WTC11 (cell line): ENCODE measurements at regions of chr1 and their contacts with region 1.

Region 1: GRCh38 chr1:19704247-19705113 is 39.8 kb downstream of the HTR6 start:
- DNase-seq: peak; percentile 90
- ATAC-seq: peak; percentile 93
- H3K4me3 Mint-ChIP-seq: peak overlapping the region; percentile 33
- H3K27ac Mint-ChIP-seq: no peak overlapping the region
- H3K4me1 Mint-ChIP-seq: peaks cover 14% of the 10 kb centered on the region
- H3K27me3 Mint-ChIP-seq: no peaks in the 10 kb centered on the region
- CTCF ChIP-seq: peak; percentile 95

Region 2: DNA sequence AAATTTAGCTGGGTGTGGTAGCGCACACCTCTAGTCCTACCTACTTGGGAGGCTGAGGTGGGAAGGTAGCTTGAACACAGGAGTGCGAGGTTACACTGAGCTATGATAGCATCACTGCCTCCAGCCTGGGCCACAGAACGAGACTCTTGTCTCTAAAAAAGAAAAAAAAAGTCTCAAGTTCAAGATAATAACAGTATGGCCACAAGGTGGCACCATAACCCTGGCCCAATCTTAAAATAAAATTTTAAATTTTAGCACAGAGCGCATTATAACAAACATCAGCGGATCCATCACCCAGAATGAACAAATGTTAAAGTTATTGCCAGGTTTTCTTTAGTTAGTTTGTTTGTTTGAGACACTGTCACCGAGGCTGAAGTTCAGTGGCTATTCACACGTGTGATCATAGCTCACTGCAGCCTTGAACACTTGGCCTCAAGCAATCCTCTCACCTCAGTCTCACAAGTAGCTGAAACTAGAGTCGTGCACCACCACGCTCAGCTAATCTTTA is 42.7 kb before region 1 on chr1:
- CTCF ChIA-PET with region 1: interaction called, 208 read pairs
- POLR2A ChIA-PET with region 1: interaction called, 4 read pairs
- DNase-seq: no peak
- ATAC-seq: no peak
- H3K4me3 Mint-ChIP-seq: no peak overlapping the region
- H3K27ac Mint-ChIP-seq: no peak overlapping the region
- H3K4me1 Mint-ChIP-seq: peaks cover 14% of the 10 kb centered on the region
- H3K27me3 Mint-ChIP-seq: peaks cover 38% of the 10 kb centered on the region
- CTCF ChIP-seq: peak; percentile 66

Region 3: GRCh38 chr1:19682257-19682656 is 22.2 kb before region 1 on chr1:
- CTCF ChIA-PET with region 1: interaction called, 38 read pairs
- POLR2A ChIA-PET with region 1: interaction called, 3 read pairs
- DNase-seq: no peak
- ATAC-seq: no peak
- H3K4me3 Mint-ChIP-seq: no peak overlapping the region
- H3K27ac Mint-ChIP-seq: no peak overlapping the region
- H3K4me1 Mint-ChIP-seq: peaks cover 16% of the 10 kb centered on the region
- H3K27me3 Mint-ChIP-seq: no peaks in the 10 kb centered on the region; the same call in 1 of the 2 replicates
- CTCF ChIP-seq: no peak

Region 4: DNA sequence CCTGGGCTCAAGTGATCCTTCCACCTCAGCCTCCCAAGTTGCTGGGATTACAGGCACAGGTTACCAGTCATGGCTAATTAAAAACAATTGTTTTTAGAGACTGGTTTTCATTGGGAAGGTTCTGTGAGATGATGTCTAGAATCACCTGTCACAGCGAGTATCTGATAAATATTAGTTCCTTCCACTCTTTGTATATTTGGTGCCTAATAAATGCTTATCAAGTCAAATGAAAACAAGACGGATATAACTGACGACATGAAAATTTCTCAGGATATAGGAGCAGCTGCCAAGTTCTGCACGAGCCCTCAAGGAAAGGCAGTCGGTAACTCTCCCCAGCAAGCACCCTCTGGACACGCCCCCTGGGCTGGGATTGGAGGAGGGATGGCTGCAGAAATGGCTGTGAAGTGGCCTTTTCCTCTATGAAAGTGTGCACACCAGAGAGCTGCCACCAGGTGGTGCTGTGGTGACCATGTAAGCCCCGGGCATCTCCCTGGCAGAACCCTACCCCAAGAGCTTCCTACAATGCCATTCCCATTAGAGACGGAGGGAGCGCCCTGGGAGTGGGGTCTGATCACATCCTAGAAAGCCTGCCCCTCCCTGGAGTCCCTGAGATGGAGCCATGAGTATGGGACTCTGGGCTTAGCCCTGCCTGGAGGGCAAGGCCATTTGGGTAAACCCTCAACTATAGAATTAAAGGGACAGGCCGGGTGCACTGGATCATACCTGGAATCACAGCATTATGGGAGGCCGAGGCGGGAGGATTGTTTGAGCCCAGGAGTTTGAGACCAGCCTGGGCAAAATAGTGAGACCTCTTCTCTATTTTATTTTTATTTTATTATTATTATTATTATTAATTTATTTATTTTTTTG is 11.1 kb after region 1 on chr1:
- CTCF ChIA-PET with region 1: interaction called, 82 read pairs
- POLR2A ChIA-PET with region 1: interaction called, 5 read pairs
- DNase-seq: peak; percentile 99
- ATAC-seq: peak; percentile 97
- H3K4me3 Mint-ChIP-seq: peak overlapping the region; percentile 15; the same call in 1 of the 2 replicates
- H3K27ac Mint-ChIP-seq: no peak overlapping the region; the same call in 1 of the 2 replicates
- H3K4me1 Mint-ChIP-seq: peaks cover 15% of the 10 kb centered on the region
- H3K27me3 Mint-ChIP-seq: no peaks in the 10 kb centered on the region; the same call in 1 of the 2 replicates
- CTCF ChIP-seq: peak; percentile 74

Region 5: DNA sequence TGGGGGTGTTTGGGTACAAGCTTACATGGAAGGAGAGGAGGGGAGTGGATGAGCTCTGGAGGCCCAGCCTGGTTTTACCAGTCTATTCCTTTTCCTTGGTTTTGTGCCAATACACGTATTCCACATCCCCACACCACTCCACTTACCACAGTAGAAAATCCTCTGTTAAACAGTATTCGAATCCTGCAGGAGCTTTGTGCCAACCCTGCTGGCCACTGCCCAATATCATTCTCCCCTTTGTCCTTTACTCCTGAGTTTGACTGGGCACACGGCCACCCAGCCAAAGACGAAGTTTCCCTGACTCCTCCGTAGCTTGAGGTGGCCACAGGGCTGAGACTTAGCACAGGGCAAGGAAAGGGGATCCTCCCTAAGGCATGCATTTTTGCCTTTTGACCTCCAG is 33.6 kb after region 1 on chr1:
- CTCF ChIA-PET with region 1: no interaction called
- POLR2A ChIA-PET with region 1: no interaction called
- DNase-seq: no peak
- ATAC-seq: no peak
- H3K4me3 Mint-ChIP-seq: no peak overlapping the region
- H3K27ac Mint-ChIP-seq: no peak overlapping the region
- H3K4me1 Mint-ChIP-seq: no peaks in the 10 kb centered on the region
- H3K27me3 Mint-ChIP-seq: no peaks in the 10 kb centered on the region
- CTCF ChIP-seq: no peak

Region 6: DNA sequence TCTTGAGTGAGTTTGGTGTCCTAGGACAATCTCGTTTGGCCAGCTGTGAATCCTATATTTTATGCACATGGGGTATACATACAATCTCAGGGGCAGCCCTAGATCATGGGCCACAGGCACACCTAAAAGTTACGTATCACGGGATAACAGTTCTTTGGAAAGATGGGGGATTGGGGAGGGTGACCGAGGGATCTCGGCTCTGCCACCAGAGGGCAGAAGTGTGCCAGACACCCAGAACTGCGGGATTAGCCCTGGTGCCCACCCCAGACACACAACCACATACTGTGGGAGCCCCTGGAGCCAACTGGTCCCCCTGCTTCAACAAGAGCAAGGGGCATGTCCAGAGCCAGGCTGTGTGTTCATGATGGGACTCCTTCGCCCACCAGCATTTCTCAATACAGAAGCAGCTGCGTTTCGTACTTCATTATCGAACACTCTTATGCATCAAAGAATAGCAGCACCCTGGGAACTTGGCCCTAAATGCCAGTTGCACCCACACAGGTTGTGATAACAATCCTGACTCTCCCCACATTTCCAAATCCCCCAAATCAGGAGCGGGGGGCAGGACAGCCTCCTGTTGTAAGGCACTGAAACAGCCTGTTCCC is 57.8 kb after region 1 on chr1:
- CTCF ChIA-PET with region 1: interaction called, 11 read pairs
- POLR2A ChIA-PET with region 1: no interaction called
- DNase-seq: peak; percentile 73
- ATAC-seq: peak; percentile 83
- H3K4me3 Mint-ChIP-seq: no peak overlapping the region
- H3K27ac Mint-ChIP-seq: no peak overlapping the region
- H3K4me1 Mint-ChIP-seq: peaks cover 12% of the 10 kb centered on the region
- H3K27me3 Mint-ChIP-seq: no peaks in the 10 kb centered on the region; the same call in 1 of the 2 replicates
- CTCF ChIP-seq: peak; percentile 73